Activated CD4-positive, alpha-beta T cell treated with anti-CD3 and anti-CD28 coated beads, Interleukin-2, amount 10 ng/mL, durations not matched to agents 24 days and 14 days (primary cell): ENCODE measurements at regions of chr19 and their contacts with region 1.

Region 1: GRCh38 chr19:35269421-35270117 is 807 bp downstream of the USF2 start:
- DNase-seq: peak; percentile 92
- H3K4me3 Mint-ChIP-seq: peak overlapping the region; percentile 73
- H3K27ac Mint-ChIP-seq: peak overlapping the region; percentile 71
- H3K4me1 Mint-ChIP-seq: peaks cover 14% of the 10 kb centered on the region
- H3K27me3 Mint-ChIP-seq: no peaks in the 10 kb centered on the region

Region 2: DNA sequence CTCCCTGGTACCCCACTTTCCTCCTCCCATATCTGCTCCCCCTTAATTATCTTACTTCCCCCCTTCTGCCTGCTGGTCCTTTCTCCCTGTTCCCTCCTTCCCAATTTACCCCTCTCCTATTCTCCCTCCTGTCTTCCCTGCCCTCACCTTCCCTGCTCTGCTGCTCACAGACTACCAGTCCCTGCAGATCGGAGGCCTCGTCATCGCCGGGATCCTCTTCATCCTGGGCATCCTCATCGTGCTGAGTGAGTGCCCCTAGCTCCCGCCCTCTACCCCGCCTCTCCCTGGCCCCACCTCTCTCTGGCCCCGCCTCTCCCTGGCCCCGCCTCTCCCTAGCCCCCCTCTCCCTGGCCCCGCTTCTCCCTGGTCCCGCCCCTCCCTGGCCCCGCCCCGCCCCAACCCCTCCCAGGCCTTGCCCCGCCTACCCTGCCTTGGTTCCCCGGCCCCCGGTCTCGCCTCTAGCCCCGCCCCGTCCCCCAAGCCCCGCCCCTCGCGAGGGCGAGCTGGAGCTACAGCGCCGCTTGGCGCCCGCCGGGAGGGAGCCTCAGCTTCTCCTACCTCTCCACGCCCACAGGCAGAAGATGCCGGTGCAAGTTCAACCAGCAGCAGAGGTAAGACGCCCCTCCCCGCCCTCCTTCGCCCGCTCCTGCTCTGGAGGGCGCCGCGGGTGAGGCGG is 128.5 kb before region 1 on chr19:
- intact Hi-C with region 1: loop called (anchors 1 kb)
- DNase-seq: peak; percentile 97
- H3K4me3 Mint-ChIP-seq: peak overlapping the region; percentile 87
- H3K27ac Mint-ChIP-seq: peak overlapping the region; percentile 83
- H3K4me1 Mint-ChIP-seq: peaks cover 31% of the 10 kb centered on the region
- H3K27me3 Mint-ChIP-seq: peaks cover 23% of the 10 kb centered on the region

Region 3: GRCh38 chr19:35468637-35469036 is 199.1 kb after region 1 on chr19:
- intact Hi-C with region 1: no loop called
- DNase-seq: peak; percentile 89
- H3K4me3 Mint-ChIP-seq: no peak overlapping the region
- H3K27ac Mint-ChIP-seq: no peak overlapping the region
- H3K4me1 Mint-ChIP-seq: peaks cover 9% of the 10 kb centered on the region
- H3K27me3 Mint-ChIP-seq: peaks cover 7% of the 10 kb centered on the region